ENCODE measurements at regions of chr11 and their contacts with region 1.

Region 1: DNA sequence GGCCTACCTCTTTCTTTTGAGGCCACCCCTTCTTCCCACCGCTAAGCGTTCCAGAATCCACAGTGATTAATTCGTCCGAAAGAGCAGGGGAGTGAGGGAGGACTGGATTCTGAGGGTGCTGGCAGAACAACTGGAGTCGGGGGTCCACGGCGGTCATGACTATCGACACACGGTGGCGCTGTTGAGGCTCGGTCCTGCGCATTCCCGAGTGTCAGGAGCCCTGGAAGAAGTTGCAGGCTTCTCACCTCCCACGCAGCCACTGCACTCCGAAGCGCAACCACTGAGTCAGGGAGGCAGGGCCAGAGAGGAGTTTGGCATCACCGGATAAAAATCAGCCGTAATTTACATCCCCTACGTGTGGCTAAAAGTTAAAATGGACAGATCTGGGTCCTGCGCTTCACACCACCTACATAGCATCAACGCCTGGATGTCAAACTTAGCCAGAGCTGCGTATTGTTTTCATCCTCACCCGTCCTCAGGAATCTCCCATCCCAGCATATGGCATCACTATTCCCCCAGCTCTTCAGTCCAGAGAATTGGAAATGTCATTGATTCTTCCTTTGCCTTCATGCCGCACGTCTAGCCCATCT is 10.7 kb upstream of the CTSF start:
- DNase-seq: peak in 1 of 2 experiments; percentile 97
- H3K4me3 ChIP-seq: no peak overlapping the region
- H3K27ac ChIP-seq: no peak overlapping the region
- H3K4me1 ChIP-seq: peaks cover 0 to 6% (median 4%) of the 10 kb centered on the region in 4 experiments; a peak in 5 of 7 replicates
- H3K27me3 ChIP-seq: peaks cover 0 to 6% (median 1%) of the 10 kb centered on the region in 4 experiments; a peak in 2 of 7 replicates
- CTCF ChIP-seq: peak; percentile 81 to 94 (median 90)
- EP300 ChIP-seq: 0 out of 3 replicates have a peak, but pooled peaks of 1 of the 2 experiments have one; percentile 26
- POLR2A ChIP-seq: no peak
- RAD21 ChIP-seq: peak; percentile 75 to 78

Region 2: GRCh38 chr11:65947146-65947545 is 632.0 kb before region 1 on chr11:
- CTCF ChIA-PET with region 1: no interaction called
- POLR2A ChIA-PET with region 1: no interaction called
- DNase-seq: peak in 1 of 2 experiments; percentile 54
- H3K4me3 ChIP-seq: no peak overlapping the region
- H3K27ac ChIP-seq: 0 out of 2 replicates have a peak overlapping the region, but pooled peaks have one; percentile 2
- H3K4me1 ChIP-seq: peaks cover 3 to 25% (median 15%) of the 10 kb centered on the region in 4 experiments
- H3K27me3 ChIP-seq: no peaks in the 10 kb centered on the region
- CTCF ChIP-seq: peak in 1 of 3 experiments; percentile 16; a peak in 1 of 4 replicates
- EP300 ChIP-seq: no peak
- POLR2A ChIP-seq: no peak
- RAD21 ChIP-seq: no peak

Region 3: GRCh38 chr11:66554602-66555001 is 24.5 kb before region 1 on chr11:
- CTCF ChIA-PET with region 1: no interaction called
- POLR2A ChIA-PET with region 1: no interaction called
- DNase-seq: no peak
- H3K4me3 ChIP-seq: no peak overlapping the region
- H3K27ac ChIP-seq: no peak overlapping the region
- H3K4me1 ChIP-seq: peaks cover 0 to 2% (median 0%) of the 10 kb centered on the region in 4 experiments; a peak in 1 of 7 replicates
- H3K27me3 ChIP-seq: no peaks in the 10 kb centered on the region
- CTCF ChIP-seq: no peak
- EP300 ChIP-seq: no peak
- POLR2A ChIP-seq: no peak
- RAD21 ChIP-seq: no peak

Region 4: GRCh38 chr11:66568124-66568916 is 10.8 kb before region 1 on chr11 and contains the start of gene CTSF:
- CTCF ChIA-PET with region 1: interaction called, 46 read pairs
- POLR2A ChIA-PET with region 1: interaction called, 51 read pairs
- DNase-seq: no peak
- H3K4me3 ChIP-seq: no peak within 1 kb of the TSS; a peak in 1 of 8 replicates
- H3K27ac ChIP-seq: no peak within 1 kb of the TSS; the same call in 1 of the 2 replicates
- H3K4me1 ChIP-seq: peaks cover 11 to 20% (median 14%) of the 10 kb centered on the region in 4 experiments; a peak in 6 of 7 replicates
- H3K27me3 ChIP-seq: no peaks in the 10 kb centered on the region
- CTCF ChIP-seq: no peak
- EP300 ChIP-seq: no peak
- POLR2A ChIP-seq: no peak
- RAD21 ChIP-seq: no peak
- total RNA-seq, gene CTSF: 0.36 and 0.58 TPM in 2 replicates